ENCODE measurements at regions of chr2 and their contacts with region 1.

Region 1: GRCh38 chr2:69724540-69725159 is 17.3 kb upstream of the ANXA4 start:
- DNase-seq: peak; percentile 74
- ATAC-seq: peak; percentile 97
- H3K4me3 ChIP-seq: peak overlapping the region; percentile 20; the same call in 1 of the 2 replicates
- H3K27ac ChIP-seq: no peak overlapping the region
- H3K4me1 ChIP-seq: no peaks in the 10 kb centered on the region
- H3K27me3 ChIP-seq: no peaks in the 10 kb centered on the region
- CTCF ChIP-seq: peak; percentile 91
- POLR2A ChIP-seq: 0 out of 2 replicates have a peak, but pooled peaks have one; percentile 44
- RAD21 ChIP-seq: peak; percentile 93

Region 2: GRCh38 chr2:69770193-69771146 is 45.8 kb after region 1 on chr2:
- CTCF ChIA-PET with region 1: interaction called, 11 read pairs
- POLR2A ChIA-PET with region 1: no interaction called
- dilution Hi-C with region 1: no loop called
- in situ Hi-C with region 1: no loop called
- intact Hi-C with region 1: no loop called
- DNase-seq: peak; percentile 88
- ATAC-seq: peak; percentile 65
- H3K4me3 ChIP-seq: no peak overlapping the region
- H3K27ac ChIP-seq: no peak overlapping the region; the same call in 1 of the 2 replicates
- H3K4me1 ChIP-seq: peaks cover 20% of the 10 kb centered on the region
- H3K27me3 ChIP-seq: no peaks in the 10 kb centered on the region
- CTCF ChIP-seq: no peak
- POLR2A ChIP-seq: no peak
- RAD21 ChIP-seq: no peak

Region 3: GRCh38 chr2:69816923-69817542 is 92.4 kb after region 1 on chr2:
- CTCF ChIA-PET with region 1: interaction called, 114 read pairs
- POLR2A ChIA-PET with region 1: no interaction called
- dilution Hi-C with region 1: no loop called
- in situ Hi-C with region 1: loop called (anchors 5 kb)
- intact Hi-C with region 1: loop called (anchors 1 kb)
- DNase-seq: peak; percentile 89
- ATAC-seq: peak; percentile 72; the same call in 1 of the 2 replicates
- H3K4me3 ChIP-seq: no peak overlapping the region
- H3K27ac ChIP-seq: no peak overlapping the region
- H3K4me1 ChIP-seq: 0 out of 2 replicates have a peak, but pooled peaks cover 3% of the 10 kb centered on the region
- H3K27me3 ChIP-seq: no peaks in the 10 kb centered on the region
- CTCF ChIP-seq: peak; percentile 86
- POLR2A ChIP-seq: no peak
- RAD21 ChIP-seq: peak; percentile 77

Region 4: GRCh38 chr2:70070541-70071268 is 346.1 kb after region 1 on chr2:
- CTCF ChIA-PET with region 1: no interaction called
- POLR2A ChIA-PET with region 1: no interaction called
- dilution Hi-C with region 1: no loop called
- in situ Hi-C with region 1: loop called (anchors 25 kb)
- intact Hi-C with region 1: no loop called
- DNase-seq: peak; percentile 90
- ATAC-seq: peak; percentile 98
- H3K4me3 ChIP-seq: no peak overlapping the region
- H3K27ac ChIP-seq: peak overlapping the region; percentile 83; the same call in 1 of the 2 replicates
- H3K4me1 ChIP-seq: peaks cover 6% of the 10 kb centered on the region
- H3K27me3 ChIP-seq: no peaks in the 10 kb centered on the region
- CTCF ChIP-seq: peak; percentile 90
- POLR2A ChIP-seq: no peak
- RAD21 ChIP-seq: peak; percentile 91

Region 5: GRCh38 chr2:70142590-70143313 is 418.1 kb after region 1 on chr2:
- CTCF ChIA-PET with region 1: interaction called, 5 read pairs
- POLR2A ChIA-PET with region 1: no interaction called
- dilution Hi-C with region 1: no loop called
- in situ Hi-C with region 1: no loop called
- intact Hi-C with region 1: loop called (anchors 5 kb)
- DNase-seq: peak; percentile 99
- ATAC-seq: peak; percentile 88
- H3K4me3 ChIP-seq: peak overlapping the region; percentile 21; the same call in 1 of the 2 replicates
- H3K27ac ChIP-seq: peak overlapping the region; percentile 77
- H3K4me1 ChIP-seq: peaks cover 12% of the 10 kb centered on the region
- H3K27me3 ChIP-seq: no peaks in the 10 kb centered on the region
- CTCF ChIP-seq: peak; percentile 99
- POLR2A ChIP-seq: peak; percentile 94
- RAD21 ChIP-seq: peak; percentile 99

Region 6: DNA sequence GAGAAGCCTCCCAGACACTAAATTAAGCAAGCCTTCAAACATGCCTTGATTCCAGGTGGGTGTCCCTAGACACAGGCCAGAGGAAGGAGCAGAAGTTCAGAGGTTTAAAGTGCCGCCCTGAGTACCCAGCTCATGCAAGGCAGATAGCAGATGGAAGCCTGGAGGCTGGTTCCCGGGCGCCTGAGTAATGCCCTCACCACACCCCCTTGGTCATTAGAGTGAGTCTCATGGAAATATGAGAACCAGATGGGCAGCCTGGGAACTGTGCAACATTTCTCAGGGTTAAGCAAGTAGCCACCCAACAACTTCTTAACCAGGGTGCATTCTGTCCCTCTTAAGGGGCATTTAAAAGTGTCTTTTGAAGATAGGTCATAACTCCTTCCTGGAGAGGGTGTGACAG is 784.9 kb after region 1 on chr2:
- CTCF ChIA-PET with region 1: no interaction called
- POLR2A ChIA-PET with region 1: no interaction called
- dilution Hi-C with region 1: no loop called
- in situ Hi-C with region 1: no loop called
- intact Hi-C with region 1: no loop called
- DNase-seq: no peak
- ATAC-seq: no peak
- H3K4me3 ChIP-seq: no peak overlapping the region
- H3K27ac ChIP-seq: no peak overlapping the region
- H3K4me1 ChIP-seq: no peaks in the 10 kb centered on the region
- H3K27me3 ChIP-seq: peaks cover 4% of the 10 kb centered on the region
- CTCF ChIP-seq: no peak
- POLR2A ChIP-seq: no peak
- RAD21 ChIP-seq: no peak

Measured in IMR-90 (cell line).